CD8-positive, alpha-beta T cell (primary cell): ENCODE measurements at regions of chr7 and their contacts with region 1.

Region 1: GRCh38 chr7:142568435-142569097 is 180.7 kb upstream of the PRSS1 start:
- DNase-seq: no peak
- ATAC-seq: no peak
- H3K4me3 ChIP-seq: no peak overlapping the region
- H3K4me3 Mint-ChIP-seq: no peak overlapping the region
- H3K27ac ChIP-seq: no peak overlapping the region
- H3K27ac Mint-ChIP-seq: no peak overlapping the region
- H3K4me1 ChIP-seq: no peaks in the 10 kb centered on the region
- H3K4me1 Mint-ChIP-seq: no peaks in the 10 kb centered on the region
- H3K27me3 ChIP-seq: no peaks in the 10 kb centered on the region
- H3K27me3 Mint-ChIP-seq: peaks cover 3% of the 10 kb centered on the region
- CTCF ChIP-seq: no peak

Region 2: GRCh38 chr7:142345811-142346210 is 222.8 kb before region 1 on chr7:
- CTCF ChIA-PET with region 1: no interaction called
- POLR2A ChIA-PET with region 1: no interaction called
- intact Hi-C with region 1: no loop called
- DNase-seq: peak in 5 of 9 experiments; percentile 33 to 70 (median 51)
- ATAC-seq: peak; percentile 90
- H3K4me3 ChIP-seq: no peak overlapping the region
- H3K4me3 Mint-ChIP-seq: peak overlapping the region; percentile 38
- H3K27ac ChIP-seq: peak overlapping the region; percentile 11 to 17
- H3K27ac Mint-ChIP-seq: peak overlapping the region; percentile 66
- H3K4me1 ChIP-seq: peaks cover 17% of the 10 kb centered on the region
- H3K4me1 Mint-ChIP-seq: peaks cover 35% of the 10 kb centered on the region
- H3K27me3 ChIP-seq: no peaks in the 10 kb centered on the region
- H3K27me3 Mint-ChIP-seq: no peaks in the 10 kb centered on the region
- CTCF ChIP-seq: no peak

Region 3: GRCh38 chr7:142478479-142479072 is 90.0 kb before region 1 on chr7:
- CTCF ChIA-PET with region 1: no interaction called
- POLR2A ChIA-PET with region 1: no interaction called
- intact Hi-C with region 1: no loop called
- DNase-seq: peak in 3 of 9 experiments; percentile 32 to 67 (median 56)
- ATAC-seq: peak; percentile 39
- H3K4me3 ChIP-seq: no peak overlapping the region
- H3K4me3 Mint-ChIP-seq: no peak overlapping the region
- H3K27ac ChIP-seq: no peak overlapping the region
- H3K27ac Mint-ChIP-seq: peak overlapping the region; percentile 53
- H3K4me1 ChIP-seq: peaks cover 80% of the 10 kb centered on the region
- H3K4me1 Mint-ChIP-seq: peaks cover 80% of the 10 kb centered on the region
- H3K27me3 ChIP-seq: no peaks in the 10 kb centered on the region
- H3K27me3 Mint-ChIP-seq: no peaks in the 10 kb centered on the region
- CTCF ChIP-seq: peak; percentile 68

Region 4: GRCh38 chr7:142557971-142558582 is 10.5 kb before region 1 on chr7:
- CTCF ChIA-PET with region 1: interaction called, 10 read pairs
- POLR2A ChIA-PET with region 1: no interaction called
- intact Hi-C with region 1: no loop called
- DNase-seq: peak; percentile 10 to 74 (median 56)
- ATAC-seq: peak; percentile 84
- H3K4me3 ChIP-seq: peak overlapping the region in 1 of 2 experiments; percentile 32
- H3K4me3 Mint-ChIP-seq: peak overlapping the region; percentile 48
- H3K27ac ChIP-seq: peak overlapping the region in 1 of 2 experiments; percentile 31
- H3K27ac Mint-ChIP-seq: peak overlapping the region; percentile 45
- H3K4me1 ChIP-seq: no peaks in the 10 kb centered on the region
- H3K4me1 Mint-ChIP-seq: peaks cover 2% of the 10 kb centered on the region
- H3K27me3 ChIP-seq: no peaks in the 10 kb centered on the region
- H3K27me3 Mint-ChIP-seq: peaks cover 3% of the 10 kb centered on the region
- CTCF ChIP-seq: peak; percentile 62

Region 5: DNA sequence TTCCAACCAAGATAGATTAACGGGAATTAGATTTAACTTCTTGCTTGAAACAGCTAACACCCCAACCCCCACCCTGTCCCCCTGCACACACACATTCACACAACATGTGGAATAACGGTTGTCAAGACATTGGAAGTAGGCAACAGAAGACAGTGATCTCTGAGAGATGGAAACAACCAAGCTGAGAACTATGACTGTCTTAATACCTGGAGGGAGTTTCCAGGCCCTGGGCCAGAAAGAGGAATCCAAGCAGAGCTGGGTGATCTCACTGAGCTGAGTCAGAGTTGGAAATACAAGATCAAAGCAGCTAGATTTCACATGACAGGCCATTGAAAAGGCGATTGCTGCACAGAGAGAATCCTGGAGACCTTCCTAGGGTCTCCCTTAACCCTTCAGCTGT is 14.8 kb after region 1 on chr7:
- CTCF ChIA-PET with region 1: no interaction called
- POLR2A ChIA-PET with region 1: no interaction called
- intact Hi-C with region 1: no loop called
- DNase-seq: peak in 2 of 9 experiments; percentile 11 to 38
- ATAC-seq: peak; percentile 43
- H3K4me3 ChIP-seq: no peak overlapping the region
- H3K4me3 Mint-ChIP-seq: no peak overlapping the region
- H3K27ac ChIP-seq: no peak overlapping the region
- H3K27ac Mint-ChIP-seq: no peak overlapping the region
- H3K4me1 ChIP-seq: peaks cover 13% of the 10 kb centered on the region
- H3K4me1 Mint-ChIP-seq: peaks cover 22% of the 10 kb centered on the region
- H3K27me3 ChIP-seq: no peaks in the 10 kb centered on the region
- H3K27me3 Mint-ChIP-seq: no peaks in the 10 kb centered on the region
- CTCF ChIP-seq: no peak